SK-N-SH (cell line): ENCODE measurements at regions of chr5 and their contacts with region 1.

Region 1: DNA sequence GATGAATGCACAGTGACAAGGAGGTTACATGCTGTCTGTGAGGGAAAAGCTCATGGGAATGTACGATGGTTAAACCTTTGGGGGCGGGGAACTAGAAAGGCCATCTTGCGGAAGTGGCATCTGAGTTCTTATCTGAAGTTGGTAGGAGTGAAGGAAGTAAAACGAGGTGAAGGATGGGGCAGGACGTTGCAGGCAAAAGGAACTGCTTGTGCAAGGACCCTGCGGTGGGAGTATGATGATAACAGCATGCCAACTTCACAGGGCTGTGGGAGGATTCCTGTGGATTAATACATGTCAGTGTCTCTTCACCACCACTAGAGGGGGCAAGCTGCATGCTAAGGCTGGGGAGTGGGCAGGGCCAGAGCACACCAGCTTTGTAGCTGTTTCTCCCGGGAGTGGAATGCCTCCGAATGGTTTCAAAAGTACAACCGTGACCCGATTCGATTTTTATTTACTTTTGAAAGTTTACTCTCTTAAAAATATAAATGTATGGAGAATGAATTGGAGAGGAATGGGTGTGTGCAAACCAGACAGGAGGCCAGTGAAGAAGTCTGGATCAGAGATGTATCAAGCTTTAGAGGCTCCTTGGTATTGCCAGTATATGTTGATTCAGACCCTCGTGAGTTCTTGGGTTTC is 62.5 kb downstream of the CYFIP2 start:
- DNase-seq: peak; percentile 88
- H3K4me3 ChIP-seq: peak overlapping the region; percentile 22 to 40; a peak in 2 of 4 replicates
- H3K27ac ChIP-seq: no peak overlapping the region
- H3K4me1 ChIP-seq: no peaks in the 10 kb centered on the region; a peak in 1 of 4 replicates
- H3K27me3 ChIP-seq: no peaks in the 10 kb centered on the region
- CTCF ChIP-seq: peak; percentile 91
- EP300 ChIP-seq: no peak
- RAD21 ChIP-seq: peak; percentile 96

Region 2: DNA sequence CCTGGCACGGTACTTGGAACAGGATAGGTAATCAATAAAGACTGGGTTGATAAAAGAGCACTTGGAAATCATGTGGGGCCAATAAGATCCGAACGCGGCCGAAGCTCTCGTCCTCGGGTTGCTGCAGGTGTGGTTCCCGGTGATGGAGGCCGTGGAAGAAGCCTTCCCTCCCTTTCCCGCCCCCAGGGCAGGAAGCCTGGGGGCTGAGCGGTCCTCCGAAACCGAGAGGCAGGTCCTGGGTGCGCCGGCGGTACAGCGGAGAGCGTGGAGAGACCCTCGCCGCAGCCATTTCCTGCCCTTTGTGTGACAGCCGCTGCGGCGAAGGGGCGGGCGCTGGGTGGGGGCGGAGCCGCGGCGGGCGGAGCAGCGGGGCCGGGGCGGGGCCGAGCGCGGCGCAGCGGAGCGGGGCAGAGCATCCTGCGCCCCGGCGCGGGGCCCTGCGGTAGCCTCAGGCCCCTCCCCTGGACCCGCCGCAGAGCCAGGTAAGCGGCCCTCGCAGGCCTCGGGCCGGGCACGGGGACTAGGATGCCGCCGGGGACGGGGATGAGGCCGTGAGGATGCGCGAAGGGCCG is 62.6 kb before region 1 on chr5 and contains the start of gene CYFIP2:
- CTCF ChIA-PET with region 1: interaction called, 14 read pairs
- POLR2A ChIA-PET with region 1: no interaction called
- DNase-seq: peak; percentile 96
- H3K4me3 ChIP-seq: peak within 1 kb of the TSS; percentile 72 to 90
- H3K27ac ChIP-seq: peak within 1 kb of the TSS in 1 of 2 experiments; percentile 65; a peak in 1 of 4 replicates
- H3K4me1 ChIP-seq: peaks cover 0 to 19% of the 10 kb centered on the region in 2 experiments; a peak in 1 of 4 replicates
- H3K27me3 ChIP-seq: peaks cover 21% of the 10 kb centered on the region
- CTCF ChIP-seq: no peak
- EP300 ChIP-seq: no peak
- RAD21 ChIP-seq: no peak
- polyA plus RNA-seq, gene CYFIP2: 20.1 and 21.3 TPM in 2 replicates

Region 3: DNA sequence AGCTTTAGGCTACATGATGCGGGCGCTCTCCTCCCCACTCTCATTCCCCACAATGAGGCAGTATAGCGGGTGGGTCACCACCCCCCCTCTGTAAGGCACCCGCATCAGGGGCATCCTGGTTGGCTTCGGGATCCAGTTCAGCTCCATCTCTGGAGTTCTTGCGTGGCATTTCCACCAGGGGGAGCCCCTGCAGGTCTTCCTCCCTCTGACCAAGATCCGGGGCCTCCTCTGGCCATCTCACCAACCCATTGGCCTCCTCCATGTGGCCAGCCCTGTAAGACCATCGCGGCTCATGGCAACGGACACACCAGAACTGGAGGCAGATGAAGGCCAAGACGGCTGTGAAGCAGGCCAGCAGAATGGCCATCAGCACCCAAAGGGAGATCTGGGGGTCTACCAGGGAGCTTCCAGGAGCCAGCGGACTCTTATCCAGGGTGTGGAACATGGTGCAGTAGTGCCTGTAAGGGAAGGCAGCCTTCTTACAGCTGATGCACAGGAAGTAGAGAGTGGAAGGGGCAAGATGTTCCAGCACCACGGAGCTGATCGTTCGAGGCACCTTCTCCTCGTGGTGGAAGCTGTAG is 14.5 kb after region 1 on chr5:
- CTCF ChIA-PET with region 1: interaction called, 46 read pairs
- POLR2A ChIA-PET with region 1: no interaction called
- DNase-seq: peak; percentile 62
- H3K4me3 ChIP-seq: no peak overlapping the region
- H3K27ac ChIP-seq: no peak overlapping the region
- H3K4me1 ChIP-seq: no peaks in the 10 kb centered on the region
- H3K27me3 ChIP-seq: no peaks in the 10 kb centered on the region
- CTCF ChIP-seq: peak; percentile 57
- EP300 ChIP-seq: no peak
- RAD21 ChIP-seq: peak; percentile 50

Region 4: GRCh38 chr5:157362012-157362411 is 33.6 kb after region 1 on chr5:
- CTCF ChIA-PET with region 1: interaction called, 15 read pairs
- POLR2A ChIA-PET with region 1: no interaction called
- DNase-seq: peak; percentile 16
- H3K4me3 ChIP-seq: no peak overlapping the region
- H3K27ac ChIP-seq: no peak overlapping the region
- H3K4me1 ChIP-seq: peaks cover 2 to 47% of the 10 kb centered on the region in 2 experiments; a peak in 3 of 4 replicates
- H3K27me3 ChIP-seq: no peaks in the 10 kb centered on the region
- CTCF ChIP-seq: no peak
- EP300 ChIP-seq: peak in 1 of 2 experiments; percentile 57; a peak in 1 of 4 replicates
- RAD21 ChIP-seq: no peak

Region 5: GRCh38 chr5:157476702-157477408 is 148.5 kb after region 1 on chr5:
- CTCF ChIA-PET with region 1: interaction called, 102 read pairs
- POLR2A ChIA-PET with region 1: no interaction called
- DNase-seq: peak; percentile 85
- H3K4me3 ChIP-seq: no peak overlapping the region
- H3K27ac ChIP-seq: peak overlapping the region; percentile 22 to 66; a peak in 3 of 4 replicates
- H3K4me1 ChIP-seq: peaks cover 2 to 9% of the 10 kb centered on the region in 2 experiments; a peak in 2 of 4 replicates
- H3K27me3 ChIP-seq: no peaks in the 10 kb centered on the region
- CTCF ChIP-seq: peak; percentile 88
- EP300 ChIP-seq: no peak
- RAD21 ChIP-seq: peak; percentile 97

Region 6: GRCh38 chr5:157520911-157521703 is 192.7 kb after region 1 on chr5:
- CTCF ChIA-PET with region 1: no interaction called
- POLR2A ChIA-PET with region 1: no interaction called
- DNase-seq: no peak
- H3K4me3 ChIP-seq: no peak overlapping the region
- H3K27ac ChIP-seq: peak overlapping the region in 1 of 2 experiments; percentile 38; a peak in 1 of 4 replicates
- H3K4me1 ChIP-seq: peaks cover 15 to 22% of the 10 kb centered on the region in 2 experiments; a peak in 3 of 4 replicates
- H3K27me3 ChIP-seq: no peaks in the 10 kb centered on the region
- CTCF ChIP-seq: no peak
- EP300 ChIP-seq: no peak
- RAD21 ChIP-seq: no peak

Region 7: DNA sequence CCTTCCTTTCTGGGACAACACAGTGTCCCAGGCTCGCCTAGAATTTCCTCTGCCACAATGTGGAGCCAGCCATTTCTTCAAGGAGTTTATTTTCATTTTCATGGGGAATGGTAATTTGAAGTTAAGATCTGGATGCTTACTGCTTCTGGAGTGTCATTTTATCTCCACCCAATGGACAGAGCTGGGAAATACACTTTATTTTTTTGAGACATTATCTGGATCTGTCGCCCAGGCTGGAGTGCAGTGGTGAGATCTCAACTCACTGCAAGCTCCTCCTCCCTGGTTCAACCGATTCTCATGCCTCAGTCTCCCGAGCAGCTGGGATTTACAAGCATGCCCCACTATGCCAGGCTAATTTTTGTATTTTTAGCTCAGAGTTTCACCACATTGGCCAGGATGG is 390.1 kb after region 1 on chr5:
- CTCF ChIA-PET with region 1: interaction called, 19 read pairs
- POLR2A ChIA-PET with region 1: no interaction called
- DNase-seq: peak; percentile 61
- H3K4me3 ChIP-seq: no peak overlapping the region; a peak in 1 of 4 replicates
- H3K27ac ChIP-seq: peak overlapping the region in 1 of 2 experiments; percentile 51; a peak in 1 of 4 replicates
- H3K4me1 ChIP-seq: no peaks in the 10 kb centered on the region; a peak in 1 of 4 replicates
- H3K27me3 ChIP-seq: no peaks in the 10 kb centered on the region
- CTCF ChIP-seq: peak; percentile 72
- EP300 ChIP-seq: no peak
- RAD21 ChIP-seq: peak; percentile 87